ENCODE measurements at regions of chr1 and their contacts with region 1.

Region 1: GRCh38 chr1:24930204-24931145 is at the start of gene RUNX3:
- ATAC-seq: peak in 6 of 8 experiments; percentile 12 to 71 (median 30)
- H3K4me3 ChIP-seq: peak within 1 kb of the TSS in 1 of 5 donors; percentile 9
- H3K27ac ChIP-seq: no peak within 1 kb of the TSS
- H3K4me1 ChIP-seq: peaks cover 0 to 8% of the 10 kb centered on the region in 2 donors
- total RNA-seq, gene RUNX3: 0.05 to 9.7 (median 0.21) TPM in 7 of 8 experiments, not detected in the other

Region 2: DNA sequence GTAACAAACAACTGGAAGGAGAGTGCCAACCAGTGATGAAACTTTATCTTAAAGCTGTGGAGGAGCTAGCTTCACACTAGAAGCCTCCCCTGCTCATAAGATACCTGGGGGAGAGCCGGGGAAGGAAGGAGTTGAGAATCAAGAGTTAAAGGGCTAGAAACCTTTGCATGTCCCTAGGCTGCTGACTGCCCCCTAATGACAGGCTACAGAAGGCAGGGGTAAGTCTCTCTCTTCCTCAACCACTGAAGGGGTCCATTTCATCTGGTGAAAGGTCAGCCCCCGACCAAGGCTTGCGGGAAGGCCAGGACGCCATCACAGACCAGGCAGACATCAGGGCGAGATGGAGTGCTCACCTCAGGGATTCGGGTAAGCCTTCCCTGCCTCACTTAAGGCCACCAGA is 676.9 kb before region 1 on chr1:
- in situ Hi-C with region 1: no loop called
- ATAC-seq: no peak
- H3K4me3 ChIP-seq: no peak overlapping the region
- H3K27ac ChIP-seq: no peak overlapping the region
- H3K4me1 ChIP-seq: no peaks in the 10 kb centered on the region

Region 3: GRCh38 chr1:25037174-25038074 is 106.9 kb after region 1 on chr1:
- in situ Hi-C with region 1: loop called in 1 of 9 experiments (anchors 10 kb)
- ATAC-seq: peak in 3 of 8 experiments; percentile 28 to 55 (median 45)
- H3K4me3 ChIP-seq: no peak overlapping the region
- H3K27ac ChIP-seq: no peak overlapping the region
- H3K4me1 ChIP-seq: no peaks in the 10 kb centered on the region

Region 4: DNA sequence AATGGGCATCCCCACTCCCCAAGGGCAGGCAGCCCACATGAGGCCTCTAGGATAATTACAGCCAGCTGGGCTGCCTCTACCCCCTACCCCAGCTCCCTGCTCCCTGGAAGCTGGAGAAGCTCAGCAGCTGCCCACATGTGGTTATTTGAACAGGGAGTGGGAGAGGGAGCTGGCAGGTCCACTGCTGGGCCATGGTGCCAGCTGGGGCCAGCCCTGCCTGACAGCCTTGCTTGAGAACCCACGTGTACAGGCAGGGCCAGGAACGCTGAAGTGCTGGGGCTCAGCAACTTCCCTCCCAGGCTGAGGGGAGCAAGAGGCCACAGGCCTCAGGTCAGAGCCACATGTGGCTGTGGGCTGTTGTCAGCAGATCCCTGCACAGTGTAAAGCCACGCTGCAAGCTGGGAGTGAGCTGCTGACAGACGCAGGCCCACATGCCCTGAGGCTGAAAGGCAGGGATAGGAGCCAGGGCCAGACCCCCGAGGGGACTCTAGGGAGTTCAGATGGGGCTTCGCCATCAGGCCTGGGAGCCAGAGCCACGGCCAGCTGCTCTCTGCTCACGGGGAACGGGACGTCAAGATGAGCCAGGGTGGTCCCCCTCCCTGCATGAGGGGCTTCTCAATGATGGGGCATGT is 172.8 kb after region 1 on chr1:
- in situ Hi-C with region 1: loop called in 3 of 9 experiments (anchors 10 to 25 kb)
- ATAC-seq: peak in 1 of 8 experiments; percentile 11
- H3K4me3 ChIP-seq: no peak overlapping the region
- H3K27ac ChIP-seq: no peak overlapping the region
- H3K4me1 ChIP-seq: peaks cover 0 to 8% of the 10 kb centered on the region in 2 donors

Region 5: GRCh38 chr1:25117233-25117823 is 186.9 kb after region 1 on chr1:
- in situ Hi-C with region 1: loop called in 2 of 9 experiments (anchors 25 kb)
- ATAC-seq: no peak
- H3K4me3 ChIP-seq: no peak overlapping the region
- H3K27ac ChIP-seq: no peak overlapping the region
- H3K4me1 ChIP-seq: no peaks in the 10 kb centered on the region

Region 6: GRCh38 chr1:25204797-25205480 is 274.5 kb after region 1 on chr1:
- in situ Hi-C with region 1: loop called in 3 of 9 experiments (anchors 25 kb)
- ATAC-seq: peak in 7 of 8 experiments; percentile 30 to 80 (median 44)
- H3K4me3 ChIP-seq: no peak overlapping the region
- H3K27ac ChIP-seq: no peak overlapping the region
- H3K4me1 ChIP-seq: peaks cover 5 to 10% of the 10 kb centered on the region in 2 donors

Measured in motor neuron (in vitro differentiated cells).